ENCODE measurements at regions of chr18 and their contacts with region 1.

Region 1: GRCh38 chr18:47772374-47773248 is 157.8 kb downstream of the SMAD2 start:
- DNase-seq: peak; percentile 52
- ATAC-seq: peak; percentile 47
- H3K4me3 ChIP-seq: no peak overlapping the region
- H3K4me3 Mint-ChIP-seq: no peak overlapping the region
- H3K27ac ChIP-seq: no peak overlapping the region
- H3K27ac Mint-ChIP-seq: no peak overlapping the region
- H3K4me1 ChIP-seq: no peaks in the 10 kb centered on the region
- H3K4me1 Mint-ChIP-seq: no peaks in the 10 kb centered on the region
- H3K27me3 ChIP-seq: peaks cover 0 to 7% (median under 1%) of the 10 kb centered on the region in 4 experiments
- H3K27me3 Mint-ChIP-seq: peaks cover 28% of the 10 kb centered on the region
- CTCF ChIP-seq: peak; percentile 90

Region 2: GRCh38 chr18:47815486-47816280 is 43.1 kb after region 1 on chr18:
- CTCF ChIA-PET with region 1: no interaction called
- POLR2A ChIA-PET with region 1: no interaction called
- intact Hi-C with region 1: no loop called
- DNase-seq: no peak
- ATAC-seq: no peak
- H3K4me3 ChIP-seq: no peak overlapping the region
- H3K4me3 Mint-ChIP-seq: no peak overlapping the region
- H3K27ac ChIP-seq: no peak overlapping the region
- H3K27ac Mint-ChIP-seq: no peak overlapping the region
- H3K4me1 ChIP-seq: no peaks in the 10 kb centered on the region
- H3K4me1 Mint-ChIP-seq: peaks cover 5% of the 10 kb centered on the region
- H3K27me3 ChIP-seq: no peaks in the 10 kb centered on the region
- H3K27me3 Mint-ChIP-seq: no peaks in the 10 kb centered on the region
- CTCF ChIP-seq: no peak

Region 3: DNA sequence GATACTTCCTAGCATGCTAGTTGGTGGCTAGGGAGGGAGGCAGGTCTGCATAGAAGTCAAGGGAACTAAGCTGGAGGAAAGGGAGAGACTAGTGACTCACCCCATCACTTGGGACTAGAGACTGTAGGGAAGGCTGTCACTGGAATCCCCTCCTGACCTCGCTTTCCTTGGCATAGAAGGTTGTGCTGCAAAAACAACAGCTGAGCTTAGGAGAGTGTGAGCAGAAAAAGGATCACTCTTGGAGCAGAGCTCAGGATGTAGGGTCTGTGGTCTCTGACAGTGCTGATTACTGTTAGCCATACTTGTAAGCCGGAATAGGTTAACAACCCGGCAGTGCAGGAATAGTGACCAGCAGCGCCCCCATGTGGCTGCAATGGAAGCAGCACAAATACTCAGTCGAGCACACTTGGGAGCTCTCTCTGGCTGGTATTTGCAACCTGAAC is 224.7 kb after region 1 on chr18:
- CTCF ChIA-PET with region 1: interaction called, 14 read pairs
- POLR2A ChIA-PET with region 1: no interaction called
- intact Hi-C with region 1: no loop called
- DNase-seq: peak; percentile 24
- ATAC-seq: no peak
- H3K4me3 ChIP-seq: no peak overlapping the region
- H3K4me3 Mint-ChIP-seq: no peak overlapping the region
- H3K27ac ChIP-seq: no peak overlapping the region
- H3K27ac Mint-ChIP-seq: no peak overlapping the region
- H3K4me1 ChIP-seq: no peaks in the 10 kb centered on the region
- H3K4me1 Mint-ChIP-seq: no peaks in the 10 kb centered on the region
- H3K27me3 ChIP-seq: peaks cover 0 to 16% (median 6%) of the 10 kb centered on the region in 4 experiments
- H3K27me3 Mint-ChIP-seq: peaks cover 38% of the 10 kb centered on the region
- CTCF ChIP-seq: peak; percentile 49

Region 4: DNA sequence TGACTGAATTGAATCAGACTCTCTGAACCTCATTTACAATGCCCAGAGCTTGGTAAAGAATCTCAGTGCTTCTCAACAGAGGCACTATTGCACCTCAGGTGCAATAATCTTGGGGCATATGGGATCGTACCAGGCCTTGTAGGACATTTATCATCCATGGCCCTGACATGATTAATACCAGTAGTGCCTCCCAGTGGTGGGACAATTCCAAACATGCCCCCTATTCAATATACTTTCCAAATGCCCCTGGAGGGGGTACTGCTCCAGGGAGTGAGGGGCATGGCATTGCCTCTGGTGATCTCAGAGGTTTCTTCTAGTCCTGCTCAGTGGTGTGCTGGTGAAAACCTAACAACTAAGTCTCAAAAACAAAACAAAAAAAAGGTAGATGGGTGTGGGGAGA is 332.7 kb after region 1 on chr18:
- CTCF ChIA-PET with region 1: no interaction called
- POLR2A ChIA-PET with region 1: no interaction called
- intact Hi-C with region 1: loop called (anchors 2 kb)
- DNase-seq: no peak
- ATAC-seq: no peak
- H3K4me3 ChIP-seq: no peak overlapping the region
- H3K4me3 Mint-ChIP-seq: no peak overlapping the region
- H3K27ac ChIP-seq: no peak overlapping the region
- H3K27ac Mint-ChIP-seq: no peak overlapping the region
- H3K4me1 ChIP-seq: no peaks in the 10 kb centered on the region
- H3K4me1 Mint-ChIP-seq: no peaks in the 10 kb centered on the region
- H3K27me3 ChIP-seq: peaks cover 0 to 7% (median 0%) of the 10 kb centered on the region in 4 experiments
- H3K27me3 Mint-ChIP-seq: peaks cover 47% of the 10 kb centered on the region
- CTCF ChIP-seq: no peak

Measured in B cell (primary cell).